H1 (cell line): ENCODE measurements at regions of chr1 and their contacts with region 1.

Region 1: GRCh38 chr1:11893907-11894251 is 32.3 kb downstream of the KIAA2013 start:
- DNase-seq: peak in 1 of 2 experiments; percentile 93
- H3K4me3 ChIP-seq: no peak overlapping the region
- H3K27ac ChIP-seq: no peak overlapping the region
- H3K4me1 ChIP-seq: no peaks in the 10 kb centered on the region; a peak in 3 of 7 replicates
- H3K27me3 ChIP-seq: no peaks in the 10 kb centered on the region
- CTCF ChIP-seq: peak; percentile 97 to 98 (median 98)
- EP300 ChIP-seq: no peak
- POLR2A ChIP-seq: no peak
- RAD21 ChIP-seq: peak; percentile 91 to 96

Region 2: GRCh38 chr1:11838349-11839272 is 55.3 kb before region 1 on chr1:
- CTCF ChIA-PET with region 1: interaction called, 67 read pairs
- POLR2A ChIA-PET with region 1: no interaction called
- DNase-seq: peak; percentile 33 to 91
- H3K4me3 ChIP-seq: no peak overlapping the region
- H3K27ac ChIP-seq: no peak overlapping the region
- H3K4me1 ChIP-seq: no peaks in the 10 kb centered on the region
- H3K27me3 ChIP-seq: no peaks in the 10 kb centered on the region
- CTCF ChIP-seq: peak; percentile 96 to 100 (median 99)
- EP300 ChIP-seq: no peak
- POLR2A ChIP-seq: no peak
- RAD21 ChIP-seq: peak; percentile 98

Region 3: GRCh38 chr1:11858968-11859871 is 34.7 kb before region 1 on chr1:
- CTCF ChIA-PET with region 1: interaction called, 27 read pairs
- POLR2A ChIA-PET with region 1: interaction called, 6 read pairs
- DNase-seq: peak in 1 of 2 experiments; percentile 94
- H3K4me3 ChIP-seq: peak overlapping the region in 3 of 4 experiments; percentile 3 to 51 (median 14); a peak in 4 of 8 replicates
- H3K27ac ChIP-seq: no peak overlapping the region
- H3K4me1 ChIP-seq: peaks cover 0 to 3% (median 1%) of the 10 kb centered on the region in 4 experiments; a peak in 1 of 7 replicates
- H3K27me3 ChIP-seq: peaks cover 0 to 22% (median 13%) of the 10 kb centered on the region in 4 experiments; a peak in 6 of 7 replicates
- CTCF ChIP-seq: peak; percentile 39 to 52 (median 42)
- EP300 ChIP-seq: no peak
- POLR2A ChIP-seq: no peak
- RAD21 ChIP-seq: peak in 1 of 2 experiments; percentile 9; a peak in 2 of 4 replicates

Region 4: DNA sequence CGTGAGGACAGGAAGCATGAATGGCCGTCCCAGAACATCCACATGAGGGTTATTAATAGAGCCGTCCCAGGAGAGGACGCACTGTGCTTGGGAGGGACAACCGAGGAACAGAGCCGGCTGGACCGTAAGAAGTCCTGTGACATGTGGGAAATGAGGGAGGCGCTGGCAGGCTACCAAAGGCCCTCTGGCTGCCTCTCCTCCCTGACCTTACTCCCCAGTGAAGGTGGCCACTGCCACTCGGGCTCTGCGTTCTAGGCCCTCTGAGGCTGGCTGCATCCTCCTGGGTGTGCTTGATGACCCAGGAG is 19.7 kb before region 1 on chr1:
- CTCF ChIA-PET with region 1: interaction called, 32 read pairs
- POLR2A ChIA-PET with region 1: interaction called, 3 read pairs
- DNase-seq: no peak
- H3K4me3 ChIP-seq: no peak overlapping the region
- H3K27ac ChIP-seq: no peak overlapping the region
- H3K4me1 ChIP-seq: no peaks in the 10 kb centered on the region
- H3K27me3 ChIP-seq: no peaks in the 10 kb centered on the region
- CTCF ChIP-seq: no peak
- EP300 ChIP-seq: no peak
- POLR2A ChIP-seq: no peak
- RAD21 ChIP-seq: no peak

Region 5: DNA sequence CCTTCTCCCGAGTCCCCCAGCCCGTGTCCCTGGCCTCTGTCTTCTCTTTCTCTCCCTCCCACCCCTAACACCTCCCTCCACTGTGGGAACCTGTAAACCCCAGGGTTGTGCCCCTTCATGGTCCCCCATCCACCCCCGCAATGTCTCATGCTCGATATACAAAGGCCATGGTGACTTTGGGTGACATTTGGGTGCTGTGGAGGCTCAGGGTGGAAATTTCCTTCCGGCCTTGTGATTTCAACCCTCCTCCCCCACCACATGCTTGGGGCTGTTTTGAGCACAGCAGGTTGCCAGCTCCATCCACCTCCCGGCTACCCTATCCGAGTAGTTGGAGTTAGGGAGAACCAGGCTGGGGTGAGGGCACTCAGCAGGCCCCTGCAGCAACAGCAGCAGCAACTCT is 310.3 kb after region 1 on chr1:
- CTCF ChIA-PET with region 1: no interaction called
- POLR2A ChIA-PET with region 1: no interaction called
- DNase-seq: no peak
- H3K4me3 ChIP-seq: no peak overlapping the region
- H3K27ac ChIP-seq: no peak overlapping the region
- H3K4me1 ChIP-seq: peaks cover 3 to 9% (median 6%) of the 10 kb centered on the region in 4 experiments
- H3K27me3 ChIP-seq: no peaks in the 10 kb centered on the region
- CTCF ChIP-seq: no peak
- EP300 ChIP-seq: no peak
- POLR2A ChIP-seq: no peak
- RAD21 ChIP-seq: no peak